HCT116 (cell line): ENCODE measurements at regions of chr1 and their contacts with region 1.

Region 1: GRCh38 chr1:160098852-160099561 is 588 bp upstream of the IGSF8 start:
- DNase-seq: peak; percentile 83
- ATAC-seq: peak; percentile 90
- H3K4me3 ChIP-seq: peak overlapping the region; percentile 19 to 39
- H3K27ac ChIP-seq: peak overlapping the region; percentile 55
- H3K4me1 ChIP-seq: peaks cover 11 to 36% of the 10 kb centered on the region in 2 experiments
- H3K27me3 ChIP-seq: no peaks in the 10 kb centered on the region
- CTCF ChIP-seq: no peak
- POLR2A ChIP-seq: no peak
- RAD21 ChIP-seq: no peak

Region 2: GRCh38 chr1:160085686-160086455 is 13.1 kb before region 1 on chr1:
- CTCF ChIA-PET with region 1: interaction called, 30 read pairs
- POLR2A ChIA-PET with region 1: interaction called, 3 read pairs
- RAD21 ChIA-PET with region 1: interaction called in 1 of 2 experiments, 3 read pairs
- intact Hi-C with region 1: no loop called
- DNase-seq: peak; percentile 44
- ATAC-seq: peak; percentile 79
- H3K4me3 ChIP-seq: no peak overlapping the region
- H3K27ac ChIP-seq: no peak overlapping the region
- H3K4me1 ChIP-seq: no peaks in the 10 kb centered on the region; a peak in 1 of 4 replicates
- H3K27me3 ChIP-seq: peaks cover 9% of the 10 kb centered on the region
- CTCF ChIP-seq: peak; percentile 74 to 92 (median 78)
- POLR2A ChIP-seq: no peak
- RAD21 ChIP-seq: peak; percentile 76

Region 3: GRCh38 chr1:160219062-160219929 is 120.3 kb after region 1 on chr1:
- CTCF ChIA-PET with region 1: interaction called, 22 read pairs
- POLR2A ChIA-PET with region 1: interaction called, 4 read pairs
- RAD21 ChIA-PET with region 1: interaction called in 1 of 2 experiments, 7 read pairs
- intact Hi-C with region 1: loop called (anchors 1 kb)
- DNase-seq: peak; percentile 19
- ATAC-seq: peak; percentile 78
- H3K4me3 ChIP-seq: no peak overlapping the region
- H3K27ac ChIP-seq: no peak overlapping the region
- H3K4me1 ChIP-seq: no peaks in the 10 kb centered on the region
- H3K27me3 ChIP-seq: no peaks in the 10 kb centered on the region
- CTCF ChIP-seq: peak; percentile 36 to 41 (median 40); a peak in 4 of 6 replicates
- POLR2A ChIP-seq: no peak
- RAD21 ChIP-seq: peak; percentile 60

Region 4: GRCh38 chr1:160291248-160292220 is 192.5 kb after region 1 on chr1:
- CTCF ChIA-PET with region 1: interaction called, 32 read pairs
- POLR2A ChIA-PET with region 1: no interaction called
- RAD21 ChIA-PET with region 1: interaction called, 3 to 6 read pairs
- intact Hi-C with region 1: loop called (anchors 1 kb)
- DNase-seq: peak; percentile 37
- ATAC-seq: peak; percentile 95
- H3K4me3 ChIP-seq: no peak overlapping the region
- H3K27ac ChIP-seq: no peak overlapping the region
- H3K4me1 ChIP-seq: no peaks in the 10 kb centered on the region
- H3K27me3 ChIP-seq: no peaks in the 10 kb centered on the region
- CTCF ChIP-seq: peak; percentile 65 to 84 (median 84)
- POLR2A ChIP-seq: no peak
- RAD21 ChIP-seq: peak; percentile 62

Region 5: DNA sequence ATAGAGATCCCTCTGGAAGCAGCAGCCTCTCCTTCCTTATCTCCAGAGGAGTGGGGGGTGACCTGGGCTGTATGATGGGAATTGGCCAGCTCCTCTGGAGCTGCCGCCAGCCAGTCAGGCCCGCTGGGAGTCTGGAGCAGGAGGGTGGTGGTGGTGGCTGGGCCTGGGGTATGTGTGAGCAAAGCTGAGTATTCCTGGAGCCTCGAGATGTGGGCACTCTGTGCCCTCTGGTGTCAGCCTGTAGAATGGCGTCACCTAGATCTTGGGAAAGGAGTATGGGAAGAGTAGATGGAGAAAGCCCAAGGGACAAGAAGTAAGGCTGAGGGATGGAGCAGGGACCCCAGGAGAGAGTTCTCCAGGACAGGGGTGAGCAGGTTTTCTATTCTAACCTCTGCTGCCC is 317.4 kb after region 1 on chr1:
- CTCF ChIA-PET with region 1: interaction called, 12 read pairs
- POLR2A ChIA-PET with region 1: no interaction called
- RAD21 ChIA-PET with region 1: no interaction called
- intact Hi-C with region 1: loop called (anchors 1 kb)
- DNase-seq: peak; percentile 36
- ATAC-seq: peak; percentile 98
- H3K4me3 ChIP-seq: no peak overlapping the region
- H3K27ac ChIP-seq: no peak overlapping the region
- H3K4me1 ChIP-seq: no peaks in the 10 kb centered on the region
- H3K27me3 ChIP-seq: no peaks in the 10 kb centered on the region
- CTCF ChIP-seq: peak; percentile 64 to 85 (median 75)
- POLR2A ChIP-seq: no peak
- RAD21 ChIP-seq: peak; percentile 94